Mammary epithelial cell (primary cell): ENCODE measurements at regions of chr2 and their contacts with region 1.

Region 1: DNA sequence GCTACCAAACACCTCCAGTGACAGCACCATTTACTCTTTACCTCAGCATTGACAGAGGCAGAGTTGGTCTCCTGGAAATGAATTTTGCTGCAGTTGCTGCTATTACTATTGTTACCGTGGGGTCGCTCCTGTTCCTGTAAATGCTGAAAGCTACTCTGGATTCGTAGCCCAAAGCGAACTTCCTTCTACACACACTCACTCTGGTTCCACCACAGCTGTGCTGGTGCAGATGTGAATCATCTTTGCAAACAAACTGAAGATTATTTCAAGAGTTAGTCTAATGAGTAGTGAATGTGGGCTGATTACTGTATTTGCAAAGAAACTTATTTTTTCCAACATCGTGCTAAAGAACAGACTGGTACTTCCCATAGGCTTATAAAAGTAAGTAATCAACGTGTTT is 304.0 kb downstream of the LPIN1 start:
- DNase-seq: peak; percentile 6
- H3K4me3 ChIP-seq: no peak overlapping the region
- H3K27ac ChIP-seq: no peak overlapping the region
- H3K4me1 ChIP-seq: peaks cover 10% of the 10 kb centered on the region
- H3K27me3 ChIP-seq: no peaks in the 10 kb centered on the region
- CTCF ChIP-seq: no peak

Region 2: DNA sequence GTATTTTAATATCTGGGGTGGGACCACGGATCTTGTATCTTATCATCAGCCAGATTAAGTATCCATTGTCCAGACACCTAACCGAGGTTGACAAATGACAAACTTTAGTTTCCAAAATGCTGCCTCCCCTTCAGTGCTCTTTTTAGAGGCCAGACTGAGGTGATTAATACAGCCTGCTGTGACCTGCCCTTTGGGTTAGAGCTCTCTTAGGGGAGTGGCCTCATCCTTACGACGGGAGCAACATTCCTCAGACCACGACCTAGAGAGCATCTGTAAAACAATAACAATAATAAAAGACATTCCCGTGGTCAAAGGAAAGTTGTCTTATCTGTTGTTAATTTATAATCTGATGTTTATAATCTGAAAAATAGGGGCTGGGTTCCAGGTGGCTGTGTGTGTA is 101.3 kb after region 1 on chr2:
- CTCF ChIA-PET with region 1: no interaction called
- dilution Hi-C with region 1: loop called (anchors 5 kb)
- in situ Hi-C with region 1: no loop called
- intact Hi-C with region 1: no loop called
- DNase-seq: peak; percentile 58
- H3K4me3 ChIP-seq: no peak overlapping the region
- H3K27ac ChIP-seq: no peak overlapping the region
- H3K4me1 ChIP-seq: peaks cover 28% of the 10 kb centered on the region
- H3K27me3 ChIP-seq: no peaks in the 10 kb centered on the region
- CTCF ChIP-seq: no peak

Region 3: GRCh38 chr2:12412898-12413305 is 362.5 kb after region 1 on chr2:
- CTCF ChIA-PET with region 1: no interaction called
- dilution Hi-C with region 1: no loop called
- in situ Hi-C with region 1: no loop called
- intact Hi-C with region 1: no loop called
- DNase-seq: no peak
- H3K4me3 ChIP-seq: no peak overlapping the region
- H3K27ac ChIP-seq: no peak overlapping the region
- H3K4me1 ChIP-seq: no peaks in the 10 kb centered on the region
- H3K27me3 ChIP-seq: no peaks in the 10 kb centered on the region
- CTCF ChIP-seq: no peak